ENCODE measurements at regions of chr7 and their contacts with region 1.

Region 1: DNA sequence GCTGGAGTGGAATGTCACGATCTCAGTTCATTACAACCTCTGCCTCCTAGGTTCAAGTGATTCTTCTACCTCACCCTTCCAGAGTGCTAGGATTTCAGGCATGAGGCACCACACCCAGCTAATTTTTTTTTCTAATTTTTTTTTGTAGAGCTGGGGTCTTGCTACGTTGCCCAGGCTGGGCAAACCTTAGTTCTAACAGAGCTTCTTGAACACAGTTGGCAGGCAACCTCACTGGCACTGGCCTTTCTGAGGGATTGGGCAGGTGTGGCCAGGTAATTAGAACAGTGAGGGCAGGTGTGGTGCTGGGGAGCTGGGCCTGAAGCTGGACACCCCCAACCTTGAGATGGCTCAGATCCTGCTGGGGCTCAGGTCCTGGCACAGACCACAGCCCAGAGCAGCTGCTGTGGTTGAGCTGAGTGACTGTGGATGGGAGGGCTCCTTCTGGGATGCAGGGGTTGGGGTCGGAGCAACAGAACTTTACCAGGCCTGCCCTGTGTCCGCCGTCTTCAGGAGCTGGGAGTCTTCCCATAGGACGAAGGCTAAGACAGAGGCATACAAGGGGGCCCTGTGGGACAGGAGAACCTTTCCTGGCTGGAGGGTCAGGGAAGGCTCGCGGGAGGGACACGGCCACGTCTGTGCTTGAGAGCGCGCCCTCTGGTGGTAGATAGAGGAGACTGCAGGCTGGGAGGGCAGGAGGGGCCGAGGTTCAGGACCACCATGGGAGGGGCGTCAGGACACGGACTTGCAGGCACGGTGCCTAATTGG is 48.2 kb downstream of the COL26A1 start:
- DNase-seq: peak in 4 of 5 donors; percentile 10 to 22 (median 14)
- H3K4me3 ChIP-seq: no peak overlapping the region
- H3K4me3 Mint-ChIP-seq: peak overlapping the region in 2 of 8 donors; percentile 28 to 43
- H3K27ac ChIP-seq: no peak overlapping the region
- H3K27ac Mint-ChIP-seq: no peak overlapping the region
- H3K4me1 ChIP-seq: no peaks in the 10 kb centered on the region
- H3K4me1 Mint-ChIP-seq: peaks cover 3 to 7% (median 6%) of the 10 kb centered on the region in 4 donors
- H3K27me3 ChIP-seq: no peaks in the 10 kb centered on the region
- H3K27me3 Mint-ChIP-seq: peaks cover 3 to 4% of the 10 kb centered on the region in 2 donors

Region 2: GRCh38 chr7:101363734-101364374 is 47.1 kb before region 1 on chr7:
- CTCF ChIA-PET with region 1: interaction called, 29 read pairs
- POLR2A ChIA-PET with region 1: interaction called, 3 read pairs
- intact Hi-C with region 1: loop called (anchors 1 kb)
- DNase-seq: peak; percentile 54 to 69 (median 63)
- H3K4me3 ChIP-seq: peak overlapping the region in 1 of 2 donors; percentile 28
- H3K4me3 Mint-ChIP-seq: peak overlapping the region in 6 of 8 donors; percentile 39 to 54 (median 43)
- H3K27ac ChIP-seq: no peak overlapping the region
- H3K27ac Mint-ChIP-seq: no peak overlapping the region
- H3K4me1 ChIP-seq: peaks cover 6% of the 10 kb centered on the region
- H3K4me1 Mint-ChIP-seq: peaks cover 0 to 5% (median 0%) of the 10 kb centered on the region in 4 donors
- H3K27me3 ChIP-seq: peaks cover 13% of the 10 kb centered on the region
- H3K27me3 Mint-ChIP-seq: peaks cover 18 to 25% of the 10 kb centered on the region in 2 donors

Region 3: DNA sequence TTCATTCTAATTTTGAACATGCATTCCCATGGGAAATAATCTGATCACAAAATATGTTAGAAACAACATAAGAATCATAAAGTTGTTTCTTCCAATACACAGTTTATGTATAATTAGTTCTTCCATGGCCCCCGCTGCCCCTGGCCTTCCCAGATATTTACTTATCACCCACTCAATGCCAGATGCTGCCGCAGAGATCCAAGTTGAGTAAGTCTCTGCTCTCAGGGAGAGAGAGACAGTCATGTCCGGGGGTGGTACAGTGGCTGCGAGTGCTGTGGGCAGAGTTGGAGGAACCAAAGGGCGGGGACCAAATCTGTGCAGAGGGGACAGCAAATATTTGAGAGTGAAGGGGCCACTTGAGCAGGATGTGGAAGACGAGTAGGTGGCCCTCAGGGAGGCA is 11.2 kb before region 1 on chr7:
- CTCF ChIA-PET with region 1: interaction called, 13 read pairs
- POLR2A ChIA-PET with region 1: no interaction called
- intact Hi-C with region 1: no loop called
- DNase-seq: no peak
- H3K4me3 ChIP-seq: no peak overlapping the region
- H3K4me3 Mint-ChIP-seq: peak overlapping the region in 1 of 8 donors; percentile 3
- H3K27ac ChIP-seq: no peak overlapping the region
- H3K27ac Mint-ChIP-seq: no peak overlapping the region
- H3K4me1 ChIP-seq: no peaks in the 10 kb centered on the region
- H3K4me1 Mint-ChIP-seq: no peaks in the 10 kb centered on the region
- H3K27me3 ChIP-seq: no peaks in the 10 kb centered on the region
- H3K27me3 Mint-ChIP-seq: peaks cover 8 to 24% of the 10 kb centered on the region in 2 donors

Region 4: DNA sequence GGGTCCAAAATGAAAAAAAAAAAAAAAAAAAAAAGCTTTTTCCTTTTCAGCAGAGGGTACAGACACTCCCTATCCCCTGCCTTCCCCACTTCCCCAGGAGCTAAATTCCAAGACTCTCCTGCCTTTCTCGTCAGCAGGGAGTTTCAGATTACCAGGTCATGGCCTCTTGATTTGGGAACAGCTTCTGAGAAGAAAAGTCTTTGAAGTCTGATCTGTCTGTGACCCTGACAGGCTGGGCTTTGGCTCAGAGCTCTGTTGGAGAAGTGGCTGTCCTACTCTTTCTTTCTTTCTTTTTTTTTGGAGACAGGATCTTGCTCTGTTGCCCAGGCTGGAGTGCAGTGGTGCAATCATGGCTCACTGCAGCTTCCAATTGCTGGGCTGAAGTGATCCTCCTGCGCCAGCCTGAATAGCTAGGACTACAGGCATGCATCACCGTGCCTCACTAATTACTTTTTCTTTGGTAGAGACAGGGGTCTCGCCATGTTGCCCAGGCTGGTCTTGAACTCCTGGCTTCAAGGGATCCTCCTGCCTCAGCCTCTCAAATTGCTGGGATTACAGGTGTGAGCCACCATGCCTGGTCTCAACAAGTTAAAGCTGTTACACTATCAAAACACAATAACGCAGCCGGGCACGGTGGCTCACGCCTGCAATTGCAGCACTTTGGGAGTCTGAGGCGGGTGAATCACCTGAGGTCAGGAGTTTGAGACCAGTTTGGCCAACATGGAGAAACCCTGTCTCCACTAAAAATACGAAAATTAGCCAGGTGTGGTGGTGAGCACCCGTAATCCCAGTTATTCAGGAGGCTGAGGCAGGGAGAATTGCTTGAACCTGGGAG is 11.7 kb after region 1 on chr7:
- CTCF ChIA-PET with region 1: interaction called, 11 read pairs
- POLR2A ChIA-PET with region 1: no interaction called
- intact Hi-C with region 1: no loop called
- DNase-seq: no peak
- H3K4me3 ChIP-seq: no peak overlapping the region
- H3K4me3 Mint-ChIP-seq: no peak overlapping the region
- H3K27ac ChIP-seq: no peak overlapping the region
- H3K27ac Mint-ChIP-seq: no peak overlapping the region
- H3K4me1 ChIP-seq: no peaks in the 10 kb centered on the region
- H3K4me1 Mint-ChIP-seq: no peaks in the 10 kb centered on the region
- H3K27me3 ChIP-seq: no peaks in the 10 kb centered on the region
- H3K27me3 Mint-ChIP-seq: peaks cover 4 to 12% of the 10 kb centered on the region in 2 donors

Region 5: GRCh38 chr7:101586078-101586905 is 175.4 kb after region 1 on chr7:
- CTCF ChIA-PET with region 1: no interaction called
- POLR2A ChIA-PET with region 1: no interaction called
- intact Hi-C with region 1: no loop called
- DNase-seq: no peak
- H3K4me3 ChIP-seq: no peak overlapping the region
- H3K4me3 Mint-ChIP-seq: no peak overlapping the region
- H3K27ac ChIP-seq: no peak overlapping the region
- H3K27ac Mint-ChIP-seq: no peak overlapping the region
- H3K4me1 ChIP-seq: no peaks in the 10 kb centered on the region
- H3K4me1 Mint-ChIP-seq: no peaks in the 10 kb centered on the region
- H3K27me3 ChIP-seq: no peaks in the 10 kb centered on the region
- H3K27me3 Mint-ChIP-seq: peaks cover 3 to 6% of the 10 kb centered on the region in 2 donors